ENCODE measurements at regions of chr12 and their contacts with region 1.

Region 1: DNA sequence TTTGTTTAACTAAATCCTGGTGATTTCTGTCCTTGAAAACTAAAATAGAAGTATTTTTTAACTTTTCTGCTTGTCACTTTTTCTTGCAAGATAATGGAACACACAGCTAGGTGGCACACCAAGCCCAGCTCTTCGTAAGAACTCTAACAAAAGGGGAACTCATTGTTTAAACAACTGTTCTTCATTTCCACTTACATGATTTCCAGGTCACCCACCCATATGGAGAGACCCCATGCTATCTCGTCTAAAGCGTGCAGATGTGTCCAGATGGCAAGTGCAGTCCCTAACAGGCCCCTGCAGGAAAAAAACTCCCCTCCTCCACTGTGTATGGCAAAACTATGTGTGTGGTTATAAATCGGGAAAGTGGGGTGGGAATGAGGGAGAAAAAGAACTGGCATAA is 43.3 kb upstream of the NT5DC3 start:
- DNase-seq: no peak
- ATAC-seq: peak in 3 of 4 donors; percentile 51 to 61 (median 59)
- H3K4me3 ChIP-seq: no peak overlapping the region
- H3K27ac ChIP-seq: no peak overlapping the region
- H3K4me1 ChIP-seq: no peaks in the 10 kb centered on the region
- H3K27me3 ChIP-seq: no peaks in the 10 kb centered on the region
- CTCF ChIP-seq: peak in 1 of 4 donors; percentile 15

Region 2: GRCh38 chr12:104108755-104109445 is 224.6 kb after region 1 on chr12:
- intact Hi-C with region 1: loop called in 1 of 3 experiments (anchors 10 kb)
- DNase-seq: peak; percentile 56 to 83 (median 69)
- ATAC-seq: peak; percentile 75 to 97 (median 94)
- H3K4me3 ChIP-seq: no peak overlapping the region
- H3K27ac ChIP-seq: no peak overlapping the region
- H3K4me1 ChIP-seq: peaks cover 0 to 24% (median 5%) of the 10 kb centered on the region in 3 donors
- H3K27me3 ChIP-seq: no peaks in the 10 kb centered on the region
- CTCF ChIP-seq: peak; percentile 62 to 91 (median 72)